ENCODE measurements at regions of chr10 and their contacts with region 1.

Region 1: GRCh38 chr10:63629363-63630084 is 108.3 kb downstream of the REEP3 start:
- DNase-seq: peak; percentile 97
- H3K4me3 Mint-ChIP-seq: peak overlapping the region; percentile 98
- H3K27ac Mint-ChIP-seq: peak overlapping the region; percentile 95
- H3K4me1 Mint-ChIP-seq: peaks cover 48% of the 10 kb centered on the region
- H3K27me3 Mint-ChIP-seq: no peaks in the 10 kb centered on the region
- CTCF ChIP-seq: peak; percentile 81

Region 2: DNA sequence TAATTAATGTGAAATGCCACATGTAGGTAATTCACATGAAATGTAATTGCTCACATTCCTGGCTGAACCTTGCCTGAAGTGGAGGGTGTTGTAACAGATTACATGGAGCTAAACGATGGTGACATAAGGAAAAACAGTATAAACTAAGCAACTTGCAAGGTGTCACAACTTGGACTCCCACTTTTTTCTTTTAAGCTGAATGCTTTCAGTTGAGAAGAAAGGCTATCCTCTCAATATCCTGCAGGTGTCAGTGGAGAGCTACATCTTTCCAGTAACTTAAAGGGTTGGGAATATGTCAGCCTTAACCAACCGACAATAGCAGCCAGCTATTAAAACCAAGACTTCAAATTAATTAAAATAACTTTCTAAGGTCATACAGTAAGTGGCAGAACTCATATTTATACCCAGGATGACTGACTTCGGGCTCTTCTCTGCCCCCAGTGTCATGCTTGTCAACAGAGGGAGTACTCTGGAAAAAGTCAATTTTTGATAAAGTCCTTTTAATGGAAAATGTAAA is 462.7 kb before region 1 on chr10:
- CTCF ChIA-PET with region 1: interaction called, 26 read pairs
- intact Hi-C with region 1: loop called (anchors 2 kb)
- DNase-seq: peak; percentile 60
- H3K4me3 Mint-ChIP-seq: no peak overlapping the region
- H3K27ac Mint-ChIP-seq: no peak overlapping the region
- H3K4me1 Mint-ChIP-seq: no peaks in the 10 kb centered on the region
- H3K27me3 Mint-ChIP-seq: no peaks in the 10 kb centered on the region
- CTCF ChIP-seq: peak; percentile 55

Region 3: GRCh38 chr10:63268798-63269503 is 360.6 kb before region 1 on chr10:
- CTCF ChIA-PET with region 1: interaction called, 5 read pairs
- intact Hi-C with region 1: loop called (anchors 2 kb)
- DNase-seq: peak; percentile 81
- H3K4me3 Mint-ChIP-seq: peak overlapping the region; percentile 93
- H3K27ac Mint-ChIP-seq: peak overlapping the region; percentile 99
- H3K4me1 Mint-ChIP-seq: peaks cover 26% of the 10 kb centered on the region
- H3K27me3 Mint-ChIP-seq: no peaks in the 10 kb centered on the region
- CTCF ChIP-seq: no peak

Region 4: GRCh38 chr10:63521416-63522276 is 107.9 kb before region 1 on chr10:
- CTCF ChIA-PET with region 1: interaction called, 5 read pairs
- intact Hi-C with region 1: loop called (anchors 5 kb)
- DNase-seq: peak; percentile 66
- H3K4me3 Mint-ChIP-seq: peak overlapping the region; percentile 76
- H3K27ac Mint-ChIP-seq: peak overlapping the region; percentile 86
- H3K4me1 Mint-ChIP-seq: peaks cover 50% of the 10 kb centered on the region
- H3K27me3 Mint-ChIP-seq: no peaks in the 10 kb centered on the region
- CTCF ChIP-seq: no peak

Region 5: GRCh38 chr10:63591600-63592372 is 37.7 kb before region 1 on chr10:
- CTCF ChIA-PET with region 1: interaction called, 4 read pairs
- intact Hi-C with region 1: loop called (anchors 1 kb)
- DNase-seq: peak; percentile 49
- H3K4me3 Mint-ChIP-seq: no peak overlapping the region
- H3K27ac Mint-ChIP-seq: peak overlapping the region; percentile 29
- H3K4me1 Mint-ChIP-seq: no peaks in the 10 kb centered on the region
- H3K27me3 Mint-ChIP-seq: no peaks in the 10 kb centered on the region
- CTCF ChIP-seq: no peak

Region 6: GRCh38 chr10:63720072-63720537 is 90.6 kb after region 1 on chr10:
- CTCF ChIA-PET with region 1: interaction called, 38 read pairs
- intact Hi-C with region 1: loop called (anchors 2 kb)
- DNase-seq: peak; percentile 68
- H3K4me3 Mint-ChIP-seq: no peak overlapping the region
- H3K27ac Mint-ChIP-seq: no peak overlapping the region
- H3K4me1 Mint-ChIP-seq: peaks cover 29% of the 10 kb centered on the region
- H3K27me3 Mint-ChIP-seq: peaks cover 2% of the 10 kb centered on the region
- CTCF ChIP-seq: peak; percentile 94

Region 7: GRCh38 chr10:63887023-63887589 is 257.6 kb after region 1 on chr10:
- CTCF ChIA-PET with region 1: no interaction called
- intact Hi-C with region 1: no loop called
- DNase-seq: no peak
- H3K4me3 Mint-ChIP-seq: no peak overlapping the region
- H3K27ac Mint-ChIP-seq: no peak overlapping the region
- H3K4me1 Mint-ChIP-seq: no peaks in the 10 kb centered on the region
- H3K27me3 Mint-ChIP-seq: peaks cover 18% of the 10 kb centered on the region
- CTCF ChIP-seq: no peak

Measured in Calu3 (cell line).